A549 (cell line): ENCODE measurements at regions of chr5 and their contacts with region 1.

Region 1: DNA sequence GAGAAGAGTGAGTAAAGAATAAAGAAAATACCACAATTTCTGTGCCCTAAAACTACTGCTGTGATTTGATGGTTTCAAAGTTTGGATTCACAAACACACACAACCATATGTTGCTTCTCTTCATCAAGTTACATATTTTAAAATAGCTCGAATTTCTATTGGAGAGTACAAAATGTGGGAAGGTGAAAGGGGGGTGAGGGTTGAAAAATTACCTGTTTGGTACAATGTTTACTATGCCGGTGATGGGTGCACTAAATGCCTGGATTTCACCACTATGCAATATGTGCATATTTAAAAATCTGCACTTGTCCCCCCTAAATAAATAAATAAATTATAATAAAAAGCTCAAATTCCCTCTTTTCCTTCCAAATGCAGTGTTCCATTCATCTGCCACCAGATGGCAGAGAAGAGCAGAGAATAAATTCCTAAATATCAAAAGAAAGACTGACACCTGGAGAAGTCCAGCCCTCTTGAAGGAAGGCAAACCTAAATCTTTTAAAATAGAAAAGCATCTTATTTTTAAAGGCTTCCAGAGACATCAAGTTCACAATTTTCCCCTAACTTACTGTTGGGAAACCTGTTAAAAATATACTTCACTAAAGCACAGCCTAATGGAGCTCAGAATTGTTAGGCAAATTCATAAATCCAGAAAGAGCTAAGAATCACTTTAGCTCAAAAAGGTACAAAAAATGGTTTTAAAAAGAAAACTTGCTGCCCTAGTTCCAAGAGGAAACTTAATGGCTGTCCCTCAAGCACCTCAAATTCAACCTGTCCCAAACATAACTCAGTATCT is 24.8 kb upstream of the HNRNPA0 start:
- DNase-seq: peak in 1 of 2 experiments; percentile 64
- ATAC-seq: peak in 1 of 2 experiments; percentile 69; a peak in 3 of 6 replicates
- H3K4me3 ChIP-seq: no peak overlapping the region
- H3K27ac ChIP-seq: no peak overlapping the region
- H3K4me1 ChIP-seq: no peaks in the 10 kb centered on the region; the same call in 2 of the 3 replicates
- CTCF ChIP-seq: peak; percentile 94
- EP300 ChIP-seq: no peak
- POLR2A ChIP-seq: no peak
- RAD21 ChIP-seq: peak; percentile 88 to 92

Region 2: GRCh38 chr5:137400571-137400970 is 378.4 kb before region 1 on chr5:
- CTCF ChIA-PET with region 1: no interaction called
- POLR2A ChIA-PET with region 1: no interaction called
- DNase-seq: no peak
- ATAC-seq: no peak
- H3K4me3 ChIP-seq: no peak overlapping the region
- H3K27ac ChIP-seq: no peak overlapping the region
- H3K4me1 ChIP-seq: peaks cover 5% of the 10 kb centered on the region
- CTCF ChIP-seq: no peak
- EP300 ChIP-seq: no peak
- POLR2A ChIP-seq: no peak
- RAD21 ChIP-seq: no peak

Region 3: DNA sequence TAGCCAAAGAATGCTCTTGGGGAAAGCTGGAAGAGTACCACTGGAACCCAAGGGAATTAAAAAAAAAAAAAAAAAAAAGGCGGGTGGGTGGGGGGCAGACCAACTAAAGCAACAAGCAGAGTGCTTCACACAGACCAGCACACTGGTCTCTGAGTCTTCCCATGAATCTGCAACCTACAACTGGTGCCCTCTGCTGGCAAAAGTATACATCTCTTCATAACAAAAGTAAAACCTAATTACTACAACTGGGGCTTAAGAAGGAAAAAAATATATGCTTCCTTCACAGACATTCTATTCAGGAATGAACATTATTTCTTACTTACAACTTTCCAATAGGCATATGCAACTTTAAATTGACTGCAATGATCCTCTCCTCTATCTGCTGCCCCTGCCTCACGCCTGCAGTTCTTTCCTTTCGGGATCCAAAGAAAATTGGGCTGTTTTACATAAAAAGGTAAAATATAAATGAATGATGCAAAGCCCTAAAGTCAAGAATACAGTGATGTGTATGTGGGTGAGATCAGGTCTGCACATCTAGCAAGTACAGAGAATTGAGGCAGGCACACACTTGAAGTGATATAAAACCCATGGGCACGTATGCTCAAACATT is 35.8 kb before region 1 on chr5:
- CTCF ChIA-PET with region 1: interaction called, 18 read pairs
- POLR2A ChIA-PET with region 1: no interaction called
- DNase-seq: peak; percentile 48 to 77
- ATAC-seq: peak; percentile 89 to 91
- H3K4me3 ChIP-seq: no peak overlapping the region
- H3K27ac ChIP-seq: no peak overlapping the region
- H3K4me1 ChIP-seq: no peaks in the 10 kb centered on the region
- CTCF ChIP-seq: peak; percentile 77
- EP300 ChIP-seq: no peak
- POLR2A ChIP-seq: no peak
- RAD21 ChIP-seq: peak; percentile 67 to 69

Region 4: DNA sequence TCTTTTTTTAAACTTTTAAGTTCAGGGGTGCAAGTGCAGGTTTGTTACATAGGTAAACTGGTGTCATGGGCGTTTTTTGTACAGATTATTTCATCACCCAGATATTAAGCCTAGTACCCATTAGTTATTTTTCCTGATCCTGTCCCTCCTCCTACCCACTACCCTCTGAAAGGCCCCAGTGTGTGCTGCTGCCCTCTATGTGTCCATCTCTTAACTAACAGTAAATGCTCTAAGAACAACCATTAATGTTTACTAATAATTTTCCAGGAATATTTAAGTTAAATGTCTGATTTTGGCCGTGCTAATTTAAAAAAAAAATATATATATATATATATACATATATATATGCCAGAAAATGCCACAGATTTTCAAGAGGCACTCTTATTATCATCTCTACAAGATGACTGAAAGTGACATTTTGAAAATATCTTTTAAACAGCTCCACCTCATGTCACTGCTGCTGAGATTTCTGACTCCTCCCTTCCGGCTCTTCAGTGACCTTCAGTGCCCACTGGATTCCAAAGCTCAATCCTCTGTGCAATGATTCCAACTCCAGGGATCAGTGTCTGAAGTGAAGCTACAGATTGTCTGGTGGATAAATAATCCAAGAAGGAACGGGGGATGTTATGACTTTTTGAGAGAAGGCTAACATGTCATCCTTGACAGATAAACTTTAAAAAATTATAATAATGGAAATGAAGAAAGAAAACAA is 21.9 kb after region 1 on chr5:
- CTCF ChIA-PET with region 1: interaction called, 34 read pairs
- POLR2A ChIA-PET with region 1: no interaction called
- DNase-seq: no peak
- ATAC-seq: no peak
- H3K4me3 ChIP-seq: no peak overlapping the region
- H3K27ac ChIP-seq: no peak overlapping the region
- H3K4me1 ChIP-seq: peaks cover 8% of the 10 kb centered on the region; the same call in 1 of the 3 replicates
- CTCF ChIP-seq: no peak
- EP300 ChIP-seq: no peak
- POLR2A ChIP-seq: no peak
- RAD21 ChIP-seq: no peak

Region 5: GRCh38 chr5:137822158-137822764 is 43.3 kb after region 1 on chr5:
- CTCF ChIA-PET with region 1: interaction called, 129 read pairs
- POLR2A ChIA-PET with region 1: no interaction called
- DNase-seq: peak; percentile 69 to 73
- ATAC-seq: peak; percentile 92 to 95
- H3K4me3 ChIP-seq: no peak overlapping the region
- H3K27ac ChIP-seq: no peak overlapping the region
- H3K4me1 ChIP-seq: peaks cover 26% of the 10 kb centered on the region
- CTCF ChIP-seq: peak; percentile 74
- EP300 ChIP-seq: no peak
- POLR2A ChIP-seq: no peak
- RAD21 ChIP-seq: peak; percentile 84 to 94

Region 6: DNA sequence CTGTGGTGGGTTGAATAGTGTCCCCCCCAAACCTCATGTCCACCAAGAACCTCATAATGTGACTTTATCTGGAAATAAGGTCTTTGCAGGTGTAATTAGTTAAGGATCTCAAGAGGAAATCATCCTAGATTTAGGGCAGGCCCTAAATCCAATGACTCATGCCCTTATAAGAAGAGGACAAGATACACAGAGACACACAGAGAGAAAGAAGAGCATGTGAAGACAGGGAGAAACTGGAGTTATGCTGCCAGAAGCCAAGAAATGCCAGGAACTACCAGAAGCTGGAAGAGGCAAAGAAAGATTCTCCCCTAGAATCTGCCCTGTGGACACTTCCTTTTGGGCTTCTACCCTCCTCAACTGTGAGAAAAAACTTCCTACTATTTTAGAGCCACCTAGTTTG is 245.1 kb after region 1 on chr5:
- CTCF ChIA-PET with region 1: interaction called, 13 read pairs
- POLR2A ChIA-PET with region 1: no interaction called
- DNase-seq: no peak
- ATAC-seq: peak in 1 of 2 experiments; percentile 54; a peak in 3 of 6 replicates
- H3K4me3 ChIP-seq: no peak overlapping the region
- H3K27ac ChIP-seq: 0 out of 6 replicates have a peak overlapping the region, but pooled peaks of 1 of the 2 experiments have one; percentile 9
- H3K4me1 ChIP-seq: peaks cover 16% of the 10 kb centered on the region
- CTCF ChIP-seq: no peak
- EP300 ChIP-seq: no peak
- POLR2A ChIP-seq: no peak
- RAD21 ChIP-seq: no peak

Region 7: DNA sequence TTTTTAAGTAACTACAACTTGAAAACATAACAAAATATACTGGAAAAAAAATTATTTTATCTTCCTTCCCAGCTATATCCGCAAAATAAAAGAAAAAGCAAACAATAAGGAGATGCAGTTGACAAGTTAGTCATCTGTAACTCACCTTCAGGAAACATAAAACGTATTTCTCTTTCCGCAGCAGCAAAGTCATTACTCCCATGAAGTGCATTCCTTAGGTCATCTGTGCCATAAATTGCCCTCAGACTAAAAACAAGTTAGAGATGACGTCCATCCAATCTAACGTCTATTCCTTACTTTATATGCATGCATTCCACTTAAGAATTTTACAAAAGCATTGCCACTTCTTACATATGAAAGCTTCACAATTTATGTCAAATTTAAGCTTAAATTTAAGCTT is 349.4 kb after region 1 on chr5:
- CTCF ChIA-PET with region 1: interaction called, 27 read pairs
- POLR2A ChIA-PET with region 1: no interaction called
- DNase-seq: no peak
- ATAC-seq: no peak
- H3K4me3 ChIP-seq: no peak overlapping the region
- H3K27ac ChIP-seq: no peak overlapping the region
- H3K4me1 ChIP-seq: 0 out of 3 replicates have a peak, but pooled peaks cover 4% of the 10 kb centered on the region
- CTCF ChIP-seq: no peak
- EP300 ChIP-seq: no peak
- POLR2A ChIP-seq: no peak
- RAD21 ChIP-seq: no peak